ENCODE measurements at regions of chr2 and their contacts with region 1.

Region 1: DNA sequence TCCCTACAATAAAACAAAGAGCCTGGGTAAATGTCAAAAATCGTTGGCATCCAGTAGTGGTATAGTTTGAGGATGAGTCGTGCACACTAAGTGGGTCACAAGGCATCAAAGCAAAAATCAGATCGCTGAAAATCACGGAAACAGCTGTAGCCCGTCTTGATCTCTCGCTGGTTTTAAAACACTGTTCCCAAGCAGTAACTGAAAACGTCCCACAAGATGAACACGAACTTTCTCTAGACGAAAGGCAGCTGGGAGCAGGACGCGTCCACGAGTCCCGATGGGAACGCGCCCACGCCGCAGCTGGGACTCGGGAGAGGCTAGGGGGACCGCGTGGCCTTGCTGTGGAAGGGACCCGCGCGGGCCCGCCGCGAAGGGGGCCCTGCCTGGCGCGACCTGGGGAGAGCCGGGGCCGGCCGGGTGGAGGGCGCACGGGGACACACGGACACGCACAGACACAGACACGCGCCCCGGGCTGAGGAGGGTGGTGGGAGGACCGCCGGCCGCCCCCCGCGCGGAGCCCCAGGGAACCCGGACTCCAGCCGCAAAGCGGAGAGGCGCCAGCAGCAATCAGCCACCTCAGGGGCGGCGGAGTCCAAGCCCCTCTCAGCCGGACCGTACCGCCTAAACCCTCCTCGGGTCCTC is 651 bp downstream of the STK17B start:
- DNase-seq: peak; percentile 44 to 79
- ATAC-seq: peak; percentile 5 to 21 (median 9)
- H3K4me3 ChIP-seq: peak overlapping the region; percentile 96
- H3K4me3 Mint-ChIP-seq: peak overlapping the region; percentile 96
- H3K27ac ChIP-seq: peak overlapping the region; percentile 94
- H3K27ac Mint-ChIP-seq: peak overlapping the region; percentile 95 to 96
- H3K4me1 ChIP-seq: peaks cover 25% of the 10 kb centered on the region
- H3K4me1 Mint-ChIP-seq: peaks cover 52 to 57% of the 10 kb centered on the region in 2 donors
- H3K27me3 ChIP-seq: no peaks in the 10 kb centered on the region
- H3K27me3 Mint-ChIP-seq: no peaks in the 10 kb centered on the region
- CTCF ChIP-seq: no peak

Region 2: GRCh38 chr2:196131384-196131937 is 39.3 kb before region 1 on chr2:
- intact Hi-C with region 1: loop called (anchors 5 kb)
- DNase-seq: peak; percentile 49 to 81
- ATAC-seq: peak; percentile 61 to 66 (median 64)
- H3K4me3 ChIP-seq: no peak overlapping the region
- H3K4me3 Mint-ChIP-seq: no peak overlapping the region
- H3K27ac ChIP-seq: no peak overlapping the region
- H3K27ac Mint-ChIP-seq: peak overlapping the region; percentile 80 to 81
- H3K4me1 ChIP-seq: peaks cover 8% of the 10 kb centered on the region
- H3K4me1 Mint-ChIP-seq: peaks cover 18 to 25% of the 10 kb centered on the region in 2 donors
- H3K27me3 ChIP-seq: no peaks in the 10 kb centered on the region
- H3K27me3 Mint-ChIP-seq: no peaks in the 10 kb centered on the region
- CTCF ChIP-seq: peak; percentile 69

Region 3: DNA sequence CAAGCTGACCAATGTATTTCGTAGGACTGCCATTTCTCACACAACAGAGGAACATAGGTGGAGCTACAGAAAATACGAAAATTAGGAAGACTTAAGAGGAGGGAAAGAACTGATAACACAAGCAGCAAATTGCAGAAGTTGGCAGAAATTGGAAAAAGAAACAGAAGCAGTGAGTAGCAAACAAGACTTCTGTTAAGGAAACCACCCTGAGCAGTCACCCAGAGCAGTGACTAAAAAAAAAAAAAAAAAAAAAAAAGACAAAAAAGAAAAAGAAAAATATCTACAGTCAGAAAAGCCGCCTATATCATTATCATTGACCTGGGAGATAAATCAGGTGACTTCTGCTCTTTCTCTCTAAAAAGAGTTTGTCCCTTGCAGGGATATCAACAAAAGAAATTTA is 20.8 kb before region 1 on chr2:
- intact Hi-C with region 1: loop called (anchors 2 kb)
- DNase-seq: peak in 1 of 2 donors; percentile 59
- ATAC-seq: peak in 2 of 3 donors; percentile 12 to 46
- H3K4me3 ChIP-seq: no peak overlapping the region
- H3K4me3 Mint-ChIP-seq: peak overlapping the region; percentile 63
- H3K27ac ChIP-seq: peak overlapping the region; percentile 49
- H3K27ac Mint-ChIP-seq: peak overlapping the region; percentile 79
- H3K4me1 ChIP-seq: peaks cover 28% of the 10 kb centered on the region
- H3K4me1 Mint-ChIP-seq: peaks cover 61% of the 10 kb centered on the region in 2 donors
- H3K27me3 ChIP-seq: no peaks in the 10 kb centered on the region
- H3K27me3 Mint-ChIP-seq: no peaks in the 10 kb centered on the region
- CTCF ChIP-seq: no peak

Region 4: DNA sequence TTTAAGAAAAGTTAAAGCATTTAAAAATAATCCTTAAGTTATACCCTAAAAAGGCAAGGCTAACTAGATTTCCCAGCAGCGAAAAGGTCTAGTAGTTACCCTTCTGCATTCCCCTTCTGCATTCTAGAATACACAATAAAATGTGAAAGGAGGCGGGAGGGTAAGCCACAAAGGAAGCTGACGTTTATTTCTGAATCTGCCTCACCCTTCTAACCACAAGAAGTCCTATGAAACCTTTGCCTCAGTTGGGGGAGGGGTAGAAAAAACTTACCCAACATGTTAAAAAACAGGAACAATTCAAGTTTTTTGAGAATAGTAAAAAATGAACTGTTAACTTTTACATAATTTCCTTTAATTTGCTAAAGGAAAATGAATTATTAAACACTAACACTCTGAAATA is 10.6 kb before region 1 on chr2:
- intact Hi-C with region 1: loop called (anchors 1 kb)
- DNase-seq: peak in 1 of 2 donors; percentile 92
- ATAC-seq: peak; percentile 69 to 84 (median 73)
- H3K4me3 ChIP-seq: peak overlapping the region; percentile 17
- H3K4me3 Mint-ChIP-seq: peak overlapping the region; percentile 75
- H3K27ac ChIP-seq: peak overlapping the region; percentile 88
- H3K27ac Mint-ChIP-seq: peak overlapping the region; percentile 86 to 95
- H3K4me1 ChIP-seq: peaks cover 35% of the 10 kb centered on the region
- H3K4me1 Mint-ChIP-seq: peaks cover 56 to 57% of the 10 kb centered on the region in 2 donors
- H3K27me3 ChIP-seq: no peaks in the 10 kb centered on the region
- H3K27me3 Mint-ChIP-seq: no peaks in the 10 kb centered on the region
- CTCF ChIP-seq: no peak

Region 5: GRCh38 chr2:196182439-196183171 is 11.9 kb after region 1 on chr2:
- intact Hi-C with region 1: loop called (anchors 2 kb)
- DNase-seq: peak in 1 of 2 donors; percentile 69
- ATAC-seq: peak; percentile 75 to 82 (median 77)
- H3K4me3 ChIP-seq: no peak overlapping the region
- H3K4me3 Mint-ChIP-seq: peak overlapping the region; percentile 69
- H3K27ac ChIP-seq: peak overlapping the region; percentile 88
- H3K27ac Mint-ChIP-seq: peak overlapping the region; percentile 90 to 98
- H3K4me1 ChIP-seq: peaks cover 47% of the 10 kb centered on the region
- H3K4me1 Mint-ChIP-seq: peaks cover 46 to 69% of the 10 kb centered on the region in 2 donors
- H3K27me3 ChIP-seq: no peaks in the 10 kb centered on the region
- H3K27me3 Mint-ChIP-seq: no peaks in the 10 kb centered on the region
- CTCF ChIP-seq: no peak

Region 6: GRCh38 chr2:196263181-196263747 is 92.5 kb after region 1 on chr2:
- intact Hi-C with region 1: loop called (anchors 5 kb)
- DNase-seq: peak in 1 of 2 donors; percentile 86
- ATAC-seq: peak; percentile 94 to 99 (median 95)
- H3K4me3 ChIP-seq: no peak overlapping the region
- H3K4me3 Mint-ChIP-seq: peak overlapping the region; percentile 83
- H3K27ac ChIP-seq: peak overlapping the region; percentile 83
- H3K27ac Mint-ChIP-seq: peak overlapping the region; percentile 90 to 92
- H3K4me1 ChIP-seq: peaks cover 11% of the 10 kb centered on the region
- H3K4me1 Mint-ChIP-seq: peaks cover 40 to 41% of the 10 kb centered on the region in 2 donors
- H3K27me3 ChIP-seq: no peaks in the 10 kb centered on the region
- H3K27me3 Mint-ChIP-seq: no peaks in the 10 kb centered on the region
- CTCF ChIP-seq: no peak

Region 7: DNA sequence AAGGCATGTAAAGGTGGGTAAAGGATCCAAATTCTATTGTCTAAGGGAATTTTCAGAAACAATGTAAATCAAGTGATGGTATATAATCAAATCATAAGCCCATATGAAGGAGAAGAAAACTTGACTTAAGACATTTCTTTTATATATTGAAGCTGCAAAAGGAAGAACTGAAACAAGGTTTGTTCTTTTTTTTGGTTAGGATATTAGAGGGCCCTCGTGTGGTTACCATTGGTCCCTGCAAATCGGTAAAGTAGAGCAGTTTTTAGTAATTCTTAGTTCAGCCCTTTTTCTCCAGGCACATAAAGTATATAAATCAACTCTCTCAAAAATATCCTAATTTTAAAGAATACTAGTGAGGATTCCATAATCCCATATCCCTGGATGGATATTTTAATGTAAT is 106.3 kb after region 1 on chr2:
- intact Hi-C with region 1: loop called (anchors 5 kb)
- DNase-seq: peak in 1 of 2 donors; percentile 80
- ATAC-seq: peak; percentile 74 to 78 (median 77)
- H3K4me3 ChIP-seq: no peak overlapping the region
- H3K4me3 Mint-ChIP-seq: peak overlapping the region; percentile 47
- H3K27ac ChIP-seq: no peak overlapping the region
- H3K27ac Mint-ChIP-seq: peak overlapping the region in 1 of 2 donors; percentile 43
- H3K4me1 ChIP-seq: peaks cover 9% of the 10 kb centered on the region
- H3K4me1 Mint-ChIP-seq: peaks cover 17 to 31% of the 10 kb centered on the region in 2 donors
- H3K27me3 ChIP-seq: no peaks in the 10 kb centered on the region
- H3K27me3 Mint-ChIP-seq: peaks cover 0 to 3% of the 10 kb centered on the region in 2 donors
- CTCF ChIP-seq: peak; percentile 75

Region 8: GRCh38 chr2:197057959-197058358 is 887.2 kb after region 1 on chr2:
- intact Hi-C with region 1: no loop called
- DNase-seq: no peak
- ATAC-seq: no peak
- H3K4me3 ChIP-seq: no peak overlapping the region
- H3K4me3 Mint-ChIP-seq: no peak overlapping the region
- H3K27ac ChIP-seq: no peak overlapping the region
- H3K27ac Mint-ChIP-seq: peak overlapping the region; percentile 43 to 45
- H3K4me1 ChIP-seq: peaks cover 7% of the 10 kb centered on the region
- H3K4me1 Mint-ChIP-seq: peaks cover 25 to 27% of the 10 kb centered on the region in 2 donors
- H3K27me3 ChIP-seq: no peaks in the 10 kb centered on the region
- H3K27me3 Mint-ChIP-seq: no peaks in the 10 kb centered on the region
- CTCF ChIP-seq: no peak